Activated naive CD4-positive, alpha-beta T cell treated with anti-CD3 and anti-CD28 coated beads, Interleukin-2, amount 10 ng/mL, durations not matched to agents 7 days and 5 days (primary cell): ENCODE measurements at regions of chr2 and their contacts with region 1.

Region 1: GRCh38 chr2:230793572-230794359 is 71.0 kb upstream of the ITM2C start:
- DNase-seq: peak; percentile 71
- H3K4me3 Mint-ChIP-seq: peak overlapping the region; percentile 63
- H3K27ac Mint-ChIP-seq: peak overlapping the region; percentile 94
- H3K4me1 Mint-ChIP-seq: peaks cover 45% of the 10 kb centered on the region
- H3K27me3 Mint-ChIP-seq: no peaks in the 10 kb centered on the region

Region 2: DNA sequence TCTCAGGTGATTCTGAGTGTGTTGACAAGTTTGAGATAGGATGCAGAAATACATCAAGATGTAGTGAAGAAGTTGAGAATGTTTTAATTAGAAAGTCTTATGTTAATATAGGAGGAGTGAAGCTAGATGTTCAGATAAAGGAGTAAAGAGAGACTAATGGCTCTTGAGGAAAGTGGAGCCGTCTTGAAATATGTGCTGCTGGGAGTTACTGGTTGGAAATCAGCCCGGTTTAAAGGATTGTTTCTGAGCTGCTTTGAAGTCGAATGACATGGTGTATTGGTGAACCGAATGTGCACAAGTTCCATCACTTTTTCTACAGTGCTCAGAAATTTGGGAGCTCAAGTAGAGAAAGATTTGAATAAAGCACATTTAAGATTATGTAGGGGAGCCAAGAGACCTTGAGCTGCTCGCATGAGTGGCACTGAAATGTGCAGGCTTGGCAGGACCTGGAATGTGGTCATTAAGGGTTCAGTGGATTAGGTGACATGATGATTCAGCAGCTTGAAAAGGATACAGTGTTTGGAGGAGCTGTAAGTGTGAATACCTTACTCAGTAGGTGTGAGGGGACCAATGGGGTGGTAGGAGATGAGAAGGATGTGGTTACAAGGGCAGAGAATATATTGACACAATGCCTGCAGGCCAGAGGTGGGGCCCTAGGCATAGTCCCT is 12.5 kb before region 1 on chr2:
- CTCF ChIA-PET with region 1: interaction called, 17 read pairs
- DNase-seq: peak; percentile 63
- H3K4me3 Mint-ChIP-seq: no peak overlapping the region
- H3K27ac Mint-ChIP-seq: peak overlapping the region; percentile 71
- H3K4me1 Mint-ChIP-seq: peaks cover 80% of the 10 kb centered on the region
- H3K27me3 Mint-ChIP-seq: no peaks in the 10 kb centered on the region